ENCODE measurements at regions of chr12 and their contacts with region 1.

Region 1: DNA sequence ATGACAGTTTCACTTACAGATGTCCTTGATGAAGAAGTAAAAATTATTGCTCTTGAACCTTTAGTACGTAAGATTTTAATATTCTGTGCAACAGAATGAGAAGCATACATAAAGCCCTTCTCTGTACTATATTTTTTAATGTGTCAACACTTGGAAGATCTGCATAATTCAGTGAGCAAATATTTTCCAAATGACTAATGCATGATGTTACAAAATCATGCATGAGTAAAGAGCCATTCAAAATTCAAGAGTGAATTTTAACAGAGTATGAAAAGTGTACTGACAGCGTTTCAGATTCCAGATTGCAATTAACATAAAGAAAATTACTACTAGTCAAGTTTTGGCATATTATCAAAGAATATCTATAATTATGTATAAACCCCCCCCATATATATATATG is 101.4 kb upstream of the BBS10 start:
- DNase-seq: no peak
- ATAC-seq: peak in 1 of 4 donors; percentile 69
- H3K4me3 ChIP-seq: no peak overlapping the region
- H3K27ac ChIP-seq: peak overlapping the region in 1 of 12 donors; percentile 1
- H3K4me1 ChIP-seq: peaks cover 0 to 20% (median 2%) of the 10 kb centered on the region in 12 donors
- H3K27me3 ChIP-seq: no peaks in the 10 kb centered on the region
- CTCF ChIP-seq: no peak
- POLR2A ChIP-seq: no peak

Region 2: GRCh38 chr12:76064904-76065303 is 384.7 kb before region 1 on chr12:
- intact Hi-C with region 1: loop called in 2 of 10 experiments (anchors 10 kb)
- DNase-seq: no peak
- ATAC-seq: no peak
- H3K4me3 ChIP-seq: no peak overlapping the region
- H3K27ac ChIP-seq: no peak overlapping the region
- H3K4me1 ChIP-seq: peaks cover 0 to 14% (median 2%) of the 10 kb centered on the region in 12 donors
- H3K27me3 ChIP-seq: no peaks in the 10 kb centered on the region
- CTCF ChIP-seq: no peak
- POLR2A ChIP-seq: no peak

Region 3: DNA sequence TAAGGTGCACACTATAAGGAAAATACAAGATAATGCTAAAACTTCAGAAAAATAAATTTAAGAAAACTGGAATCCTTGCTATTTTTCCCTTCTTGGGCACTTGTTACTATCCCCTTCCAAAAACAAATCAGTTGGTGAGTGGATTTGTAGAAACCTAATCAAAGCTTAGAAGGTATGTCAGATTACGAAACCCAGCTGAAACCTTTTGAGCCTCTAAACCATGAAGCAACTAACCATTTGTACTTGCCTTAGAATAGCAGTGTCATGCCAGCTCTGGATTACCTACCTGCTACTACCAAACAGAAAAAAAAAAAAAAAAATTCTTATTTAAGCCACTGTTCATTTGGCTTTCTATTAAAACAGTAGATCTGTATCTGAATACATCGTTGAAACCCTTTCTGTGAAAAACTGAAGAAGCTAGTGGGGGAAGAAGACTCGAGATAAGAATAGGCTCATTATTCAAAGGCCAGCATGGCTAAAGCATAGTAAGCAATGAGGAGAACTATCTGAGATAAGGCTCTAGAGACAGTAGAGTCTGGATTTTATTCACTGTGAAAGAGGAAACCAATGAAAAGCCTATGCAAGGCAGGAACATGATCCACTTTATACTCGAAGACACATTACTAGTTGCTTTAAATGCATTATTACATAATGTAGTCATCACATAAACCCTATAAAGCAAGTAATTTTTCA is 79.8 kb after region 1 on chr12:
- intact Hi-C with region 1: no loop called
- DNase-seq: no peak
- ATAC-seq: no peak
- H3K4me3 ChIP-seq: no peak overlapping the region
- H3K27ac ChIP-seq: no peak overlapping the region
- H3K4me1 ChIP-seq: peaks cover 0 to 32% (median 12%) of the 10 kb centered on the region in 12 donors
- H3K27me3 ChIP-seq: no peaks in the 10 kb centered on the region
- CTCF ChIP-seq: no peak
- POLR2A ChIP-seq: no peak

Measured in heart left ventricle (tissue), 16 donors.